ENCODE measurements at regions of chr1 and their contacts with region 1.

Region 1: GRCh38 chr1:30525971-30526651 is 197.3 kb downstream of the MATN1 start:
- DNase-seq: peak; percentile 89 to 94
- ATAC-seq: peak; percentile 50 to 53
- H3K4me3 ChIP-seq: no peak overlapping the region
- H3K27ac ChIP-seq: peak overlapping the region; percentile 89 to 99 (median 93)
- H3K4me1 ChIP-seq: peaks cover 57 to 59% of the 10 kb centered on the region in 2 donors
- H3K27me3 ChIP-seq: no peaks in the 10 kb centered on the region
- CTCF ChIP-seq: peak in 1 of 5 experiments; percentile 16
- POLR2A ChIP-seq: peak; percentile 45 to 73

Region 2: GRCh38 chr1:29235955-29236684 is 1290.0 kb before region 1 on chr1 and contains the start of gene PTPRU:
- in situ Hi-C with region 1: no loop called
- intact Hi-C with region 1: loop called (anchors 2 kb)
- DNase-seq: peak; percentile 50 to 60
- ATAC-seq: peak; percentile 58 to 62
- H3K4me3 ChIP-seq: peak within 1 kb of the TSS; percentile 59 to 77 (median 72)
- H3K27ac ChIP-seq: peak within 1 kb of the TSS; percentile 73 to 86 (median 80)
- H3K4me1 ChIP-seq: peaks cover 9 to 11% of the 10 kb centered on the region in 2 donors
- H3K27me3 ChIP-seq: no peaks in the 10 kb centered on the region
- CTCF ChIP-seq: peak; percentile 59 to 99 (median 98)
- POLR2A ChIP-seq: peak; percentile 56 to 58
- total RNA-seq, gene PTPRU: 11.4 to 59.4 (median 35.3) TPM

Region 3: GRCh38 chr1:30336550-30337323 is 189.4 kb before region 1 on chr1:
- in situ Hi-C with region 1: no loop called
- intact Hi-C with region 1: loop called (anchors 2 kb)
- DNase-seq: peak; percentile 44 to 86
- ATAC-seq: peak; percentile 78 to 82
- H3K4me3 ChIP-seq: no peak overlapping the region
- H3K27ac ChIP-seq: peak overlapping the region; percentile 84 to 93 (median 86)
- H3K4me1 ChIP-seq: peaks cover 8 to 25% of the 10 kb centered on the region in 2 donors
- H3K27me3 ChIP-seq: no peaks in the 10 kb centered on the region
- CTCF ChIP-seq: no peak
- POLR2A ChIP-seq: no peak

Region 4: GRCh38 chr1:30407865-30408580 is 118.1 kb before region 1 on chr1:
- in situ Hi-C with region 1: no loop called
- intact Hi-C with region 1: loop called (anchors 2 kb)
- DNase-seq: no peak
- ATAC-seq: no peak
- H3K4me3 ChIP-seq: no peak overlapping the region
- H3K27ac ChIP-seq: no peak overlapping the region
- H3K4me1 ChIP-seq: no peaks in the 10 kb centered on the region
- H3K27me3 ChIP-seq: no peaks in the 10 kb centered on the region
- CTCF ChIP-seq: no peak
- POLR2A ChIP-seq: no peak

Region 5: DNA sequence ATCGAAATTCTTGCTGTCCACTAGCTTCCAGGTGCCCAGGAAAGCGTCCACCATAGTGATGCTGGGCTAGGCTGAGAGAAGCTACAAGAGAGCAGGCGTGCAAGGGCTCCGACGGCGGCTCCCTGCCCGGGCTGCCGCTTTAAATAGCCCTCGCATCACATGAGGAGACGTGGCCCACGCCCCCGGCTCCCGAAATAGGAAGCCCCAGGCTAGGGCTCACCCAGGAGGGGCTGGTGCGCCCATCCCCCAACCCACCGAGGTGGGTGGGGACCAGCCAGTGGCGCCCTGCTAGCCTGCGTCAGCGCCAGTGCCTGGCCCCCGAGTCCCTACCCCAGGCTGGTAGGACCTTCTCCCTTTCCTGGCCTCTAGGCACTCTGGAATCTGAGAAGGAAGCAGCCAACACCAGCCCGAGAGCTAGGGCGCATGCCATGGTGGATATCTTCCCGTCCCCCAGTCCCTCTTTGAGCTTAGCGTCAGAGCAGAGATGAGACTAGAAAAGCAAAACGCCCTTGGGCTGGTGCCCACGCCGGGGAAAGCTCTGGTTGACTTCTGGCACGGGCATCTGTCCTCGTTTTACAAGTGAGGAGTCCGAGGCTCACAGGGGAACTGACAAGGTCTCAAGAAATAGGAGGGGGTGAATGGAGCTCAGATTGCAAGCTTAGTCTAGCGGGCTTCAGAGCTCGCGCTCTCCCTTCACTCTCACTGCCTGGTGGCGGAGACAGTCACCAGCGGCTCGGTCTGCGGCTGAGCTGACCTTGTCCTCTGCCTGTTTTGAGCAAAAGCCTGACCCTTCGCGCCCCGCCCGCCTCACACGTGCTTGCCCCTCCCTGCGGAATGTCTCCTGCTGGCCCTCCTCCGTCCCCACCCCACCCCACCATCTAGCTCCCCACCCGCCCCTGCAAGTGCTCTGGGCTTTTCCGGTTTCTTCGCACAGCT is 847.1 kb after region 1 on chr1 and contains the start of gene FABP3:
- in situ Hi-C with region 1: no loop called
- intact Hi-C with region 1: loop called (anchors 5 kb)
- DNase-seq: peak; percentile 84 to 95
- ATAC-seq: peak; percentile 66 to 73
- H3K4me3 ChIP-seq: peak within 1 kb of the TSS; percentile 58 to 72 (median 70)
- H3K27ac ChIP-seq: peak within 1 kb of the TSS; percentile 99 to 100 (median 99)
- H3K4me1 ChIP-seq: peaks cover 46 to 63% of the 10 kb centered on the region in 2 donors
- H3K27me3 ChIP-seq: no peaks in the 10 kb centered on the region
- CTCF ChIP-seq: peak in 1 of 5 experiments; percentile 25
- POLR2A ChIP-seq: peak; percentile 91 to 94
- total RNA-seq, gene FABP3: 886 to 2,424 (median 1,240) TPM